MCF 10A (cell line): ENCODE measurements at regions of chr19 and their contacts with region 1.

Region 1: DNA sequence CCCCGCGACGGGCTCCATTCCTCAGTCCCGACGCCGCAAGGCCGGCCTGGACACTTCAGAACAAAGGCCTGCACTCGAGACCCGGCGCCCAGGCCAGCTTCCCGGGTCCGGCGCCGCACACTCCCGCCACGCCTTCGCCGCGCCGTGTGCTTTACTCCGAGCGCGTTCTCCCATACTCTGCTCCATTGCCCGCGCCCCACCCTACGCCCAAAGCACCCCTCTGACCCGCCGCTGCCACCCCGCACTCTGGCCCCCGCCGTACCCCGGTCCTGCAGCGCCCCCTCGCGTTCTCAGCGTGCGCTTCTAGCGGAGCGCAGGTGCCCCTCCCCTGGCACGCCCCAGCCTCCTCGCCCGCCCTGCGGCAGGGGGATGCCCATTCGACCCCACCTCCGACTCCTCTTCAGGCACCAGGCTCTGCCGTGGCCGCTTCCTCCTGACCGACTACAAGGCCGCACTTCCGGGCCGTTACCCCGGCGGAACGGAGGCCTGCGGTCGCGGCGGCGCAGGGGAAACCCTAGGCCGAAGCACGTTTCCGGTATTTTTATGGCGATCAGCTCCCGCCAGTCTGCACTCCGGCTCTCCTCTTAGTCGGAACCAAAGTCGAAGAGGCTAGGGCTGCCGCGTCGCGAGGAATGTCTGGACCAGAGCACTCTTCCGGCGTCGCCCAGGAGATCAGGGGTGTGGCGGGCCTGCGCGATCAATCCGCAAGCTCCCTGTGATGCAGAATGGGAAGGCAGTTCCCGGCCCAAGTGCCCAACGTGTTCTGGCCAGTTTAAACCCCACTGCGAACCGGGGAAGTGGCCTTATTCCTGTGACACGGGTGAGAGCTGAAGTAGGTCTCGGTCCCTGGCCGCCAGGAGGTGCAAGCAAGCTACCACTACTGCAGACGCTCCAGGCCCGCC is at the start of gene ZBTB45:
- DNase-seq: peak; percentile 98
- H3K4me3 Mint-ChIP-seq: peak within 1 kb of the TSS; percentile 83
- H3K27ac Mint-ChIP-seq: peak within 1 kb of the TSS; percentile 100
- H3K4me1 Mint-ChIP-seq: peaks cover 27% of the 10 kb centered on the region
- H3K27me3 Mint-ChIP-seq: no peaks in the 10 kb centered on the region
- CTCF ChIP-seq: peak; percentile 86
- total RNA-seq, gene ZBTB45: 12.8 and 15.0 TPM in 2 replicates

Region 2: DNA sequence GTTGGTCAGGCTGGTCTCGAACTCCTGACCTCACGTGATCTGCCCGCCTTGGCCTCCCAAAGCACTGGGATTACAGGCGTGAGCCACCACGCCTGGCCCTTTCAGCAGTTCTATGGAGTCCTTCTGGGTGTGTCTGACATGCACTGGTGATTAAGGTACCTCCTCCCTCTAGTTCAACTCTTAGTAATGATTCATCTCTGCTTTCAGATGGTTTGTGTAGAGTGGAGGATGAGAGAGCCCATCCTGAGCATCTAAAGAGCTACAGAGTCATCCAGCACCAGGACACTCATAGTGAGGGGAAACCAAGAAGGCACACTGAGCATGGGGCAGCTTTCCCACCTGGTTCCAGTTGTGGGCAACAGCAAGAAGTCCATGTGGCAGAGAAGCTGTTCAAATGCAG is 103.0 kb before region 1 on chr19:
- CTCF ChIA-PET with region 1: no interaction called
- POLR2A ChIA-PET with region 1: no interaction called
- intact Hi-C with region 1: no loop called
- DNase-seq: no peak
- H3K4me3 Mint-ChIP-seq: no peak overlapping the region
- H3K27ac Mint-ChIP-seq: no peak overlapping the region
- H3K4me1 Mint-ChIP-seq: no peaks in the 10 kb centered on the region
- H3K27me3 Mint-ChIP-seq: no peaks in the 10 kb centered on the region
- CTCF ChIP-seq: no peak

Region 3: GRCh38 chr19:58475714-58476497 is 43.7 kb before region 1 on chr19 and contains the start of gene ZNF446:
- CTCF ChIA-PET with region 1: interaction called, 6 read pairs
- POLR2A ChIA-PET with region 1: interaction called, 13 read pairs
- intact Hi-C with region 1: no loop called
- DNase-seq: peak; percentile 97
- H3K4me3 Mint-ChIP-seq: peak within 1 kb of the TSS; percentile 90
- H3K27ac Mint-ChIP-seq: peak within 1 kb of the TSS; percentile 92
- H3K4me1 Mint-ChIP-seq: peaks cover 10% of the 10 kb centered on the region
- H3K27me3 Mint-ChIP-seq: no peaks in the 10 kb centered on the region
- CTCF ChIP-seq: no peak
- total RNA-seq, gene ZNF446: 8.3 and 10.3 TPM in 2 replicates

Region 4: DNA sequence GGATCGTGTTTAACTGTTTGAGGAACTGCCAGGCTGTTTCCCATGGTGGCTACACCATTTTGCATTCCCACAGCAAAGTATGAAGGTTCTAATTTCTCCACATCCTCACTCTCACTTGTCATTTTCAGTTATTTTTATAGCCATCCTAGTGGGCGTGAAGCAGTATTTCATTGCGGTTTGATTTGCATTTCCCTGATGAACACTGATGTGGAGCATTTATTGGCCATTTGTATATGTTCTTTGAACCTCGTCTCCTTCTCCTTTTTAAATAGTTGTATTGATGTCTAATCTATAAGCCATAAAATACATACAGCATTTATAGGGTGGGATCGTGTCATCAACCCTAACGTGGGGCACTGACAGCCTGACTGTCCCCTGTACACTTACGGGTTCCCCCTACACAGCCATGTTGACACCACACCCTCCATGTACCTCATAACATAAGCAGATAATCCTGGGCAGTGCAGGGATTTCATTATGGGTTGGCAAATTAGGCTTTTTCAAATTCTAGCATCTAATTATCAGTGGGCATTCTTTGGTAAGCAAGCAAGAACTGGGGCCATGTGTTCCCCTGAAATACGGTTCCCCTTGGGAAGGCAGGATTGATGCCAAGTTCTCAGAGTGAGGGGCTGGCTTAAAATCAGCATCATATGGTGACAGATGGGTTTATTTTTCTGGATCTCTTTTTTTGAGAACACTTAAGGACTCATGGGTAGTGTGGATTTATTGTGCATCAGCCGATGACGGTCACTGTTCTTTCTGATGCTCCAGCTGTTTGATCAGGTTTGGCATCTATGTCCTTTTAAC is 11.6 kb after region 1 on chr19:
- CTCF ChIA-PET with region 1: interaction called, 7 read pairs
- POLR2A ChIA-PET with region 1: interaction called, 20 read pairs
- intact Hi-C with region 1: no loop called
- DNase-seq: no peak
- H3K4me3 Mint-ChIP-seq: no peak overlapping the region
- H3K27ac Mint-ChIP-seq: no peak overlapping the region
- H3K4me1 Mint-ChIP-seq: no peaks in the 10 kb centered on the region
- H3K27me3 Mint-ChIP-seq: peaks cover 32% of the 10 kb centered on the region
- CTCF ChIP-seq: no peak

Region 5: GRCh38 chr19:58550362-58551122 is 30.9 kb after region 1 on chr19:
- CTCF ChIA-PET with region 1: interaction called, 43 read pairs
- POLR2A ChIA-PET with region 1: interaction called, 194 read pairs
- intact Hi-C with region 1: loop called (anchors 2 kb)
- DNase-seq: no peak
- H3K4me3 Mint-ChIP-seq: no peak overlapping the region
- H3K27ac Mint-ChIP-seq: peak overlapping the region; percentile 46
- H3K4me1 Mint-ChIP-seq: peaks cover 41% of the 10 kb centered on the region
- H3K27me3 Mint-ChIP-seq: no peaks in the 10 kb centered on the region
- CTCF ChIP-seq: no peak

Region 6: GRCh38 chr19:58572818-58573657 is 53.4 kb after region 1 on chr19 and contains the start of gene MZF1:
- CTCF ChIA-PET with region 1: interaction called, 9 read pairs
- POLR2A ChIA-PET with region 1: interaction called, 28 read pairs
- intact Hi-C with region 1: no loop called
- DNase-seq: peak; percentile 100
- H3K4me3 Mint-ChIP-seq: peak within 1 kb of the TSS; percentile 89
- H3K27ac Mint-ChIP-seq: peak within 1 kb of the TSS; percentile 98
- H3K4me1 Mint-ChIP-seq: peaks cover 23% of the 10 kb centered on the region
- H3K27me3 Mint-ChIP-seq: no peaks in the 10 kb centered on the region
- CTCF ChIP-seq: no peak
- total RNA-seq, gene MZF1: 50.7 and 51.9 TPM in 2 replicates